ENCODE measurements at regions of chr3 and their contacts with region 1.

Region 1: DNA sequence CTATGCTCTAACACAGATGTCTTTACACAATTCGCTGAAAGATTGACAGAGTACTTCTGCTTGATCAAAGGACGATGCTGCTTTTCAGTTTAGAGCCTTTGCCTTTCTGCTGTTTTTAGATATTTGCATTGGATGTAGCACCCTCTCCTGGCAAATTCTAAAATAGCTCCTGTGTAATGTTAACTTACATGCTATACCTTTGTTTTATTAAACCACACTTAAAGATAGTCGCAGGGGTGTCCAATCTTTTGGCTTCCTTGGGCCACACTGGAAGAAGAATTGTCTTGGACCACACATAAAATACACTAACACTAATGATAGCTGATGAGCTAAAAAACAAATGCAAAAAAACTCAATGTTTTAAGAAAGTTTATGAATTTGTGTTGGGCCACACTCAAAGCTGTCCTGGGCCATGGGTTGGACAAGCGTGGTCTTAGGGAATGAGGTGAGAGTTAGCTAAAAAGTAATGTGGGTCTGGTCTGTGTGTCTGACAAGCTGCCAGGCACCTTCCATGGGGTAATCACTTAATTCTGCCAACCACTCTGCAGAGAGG is 62.9 kb downstream of the ATG7 start:
- H3K4me3 ChIP-seq: no peak overlapping the region
- H3K27ac ChIP-seq: no peak overlapping the region
- H3K4me1 ChIP-seq: no peaks in the 10 kb centered on the region
- CTCF ChIP-seq: no peak

Region 2: GRCh38 chr3:11155341-11156025 is 179.6 kb before region 1 on chr3:
- CTCF ChIA-PET with region 1: interaction called, 32 read pairs
- POLR2A ChIA-PET with region 1: interaction called, 6 read pairs
- H3K4me3 ChIP-seq: peak overlapping the region; percentile 48
- H3K27ac ChIP-seq: no peak overlapping the region
- H3K4me1 ChIP-seq: peaks cover 5% of the 10 kb centered on the region
- CTCF ChIP-seq: peak; percentile 69

Region 3: GRCh38 chr3:11236595-11237461 is 98.3 kb before region 1 on chr3:
- CTCF ChIA-PET with region 1: interaction called, 63 read pairs
- POLR2A ChIA-PET with region 1: interaction called, 6 read pairs
- H3K4me3 ChIP-seq: no peak overlapping the region
- H3K27ac ChIP-seq: no peak overlapping the region
- H3K4me1 ChIP-seq: no peaks in the 10 kb centered on the region
- CTCF ChIP-seq: no peak

Region 4: DNA sequence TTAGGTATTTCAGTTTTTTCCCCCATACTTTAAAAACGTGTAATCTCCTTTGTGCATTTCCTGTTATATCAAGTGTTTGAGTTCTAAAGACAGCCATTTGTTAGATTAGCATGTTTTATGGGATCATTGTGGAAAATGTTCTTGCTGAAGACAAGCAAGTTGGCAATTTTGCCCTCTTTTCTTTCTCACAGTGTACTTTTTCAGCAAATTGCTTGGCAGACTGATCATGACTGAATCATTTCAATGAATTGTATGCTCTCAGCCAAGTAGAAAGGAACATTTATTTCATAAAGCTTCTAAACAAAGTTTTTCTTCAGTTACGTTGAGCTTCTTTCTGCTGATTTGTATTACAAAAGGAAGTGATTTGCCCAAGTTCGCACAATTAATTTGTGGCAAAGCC is 11.3 kb before region 1 on chr3:
- CTCF ChIA-PET with region 1: interaction called, 25 read pairs
- POLR2A ChIA-PET with region 1: no interaction called
- H3K4me3 ChIP-seq: no peak overlapping the region
- H3K27ac ChIP-seq: no peak overlapping the region
- H3K4me1 ChIP-seq: no peaks in the 10 kb centered on the region
- CTCF ChIP-seq: no peak

Region 5: GRCh38 chr3:11350374-11350773 is 15.2 kb after region 1 on chr3:
- CTCF ChIA-PET with region 1: interaction called, 19 read pairs
- POLR2A ChIA-PET with region 1: no interaction called
- H3K4me3 ChIP-seq: no peak overlapping the region
- H3K27ac ChIP-seq: no peak overlapping the region
- H3K4me1 ChIP-seq: no peaks in the 10 kb centered on the region
- CTCF ChIP-seq: no peak